A549 (cell line): ENCODE measurements at regions of chr7 and their contacts with region 1.

Region 1: GRCh38 chr7:26200444-26201246 is at the start of gene HNRNPA2B1:
- DNase-seq: peak; percentile 71 to 97
- ATAC-seq: peak; percentile 68 to 78
- H3K4me3 ChIP-seq: peak within 1 kb of the TSS; percentile 92
- H3K27ac ChIP-seq: peak within 1 kb of the TSS; percentile 99
- H3K4me1 ChIP-seq: peaks cover 37% of the 10 kb centered on the region
- CTCF ChIP-seq: no peak
- EP300 ChIP-seq: no peak
- POLR2A ChIP-seq: peak; percentile 99
- RAD21 ChIP-seq: no peak
- polyA plus RNA-seq, gene HNRNPA2B1: 595 and 1,070 TPM in 2 replicates

Region 2: DNA sequence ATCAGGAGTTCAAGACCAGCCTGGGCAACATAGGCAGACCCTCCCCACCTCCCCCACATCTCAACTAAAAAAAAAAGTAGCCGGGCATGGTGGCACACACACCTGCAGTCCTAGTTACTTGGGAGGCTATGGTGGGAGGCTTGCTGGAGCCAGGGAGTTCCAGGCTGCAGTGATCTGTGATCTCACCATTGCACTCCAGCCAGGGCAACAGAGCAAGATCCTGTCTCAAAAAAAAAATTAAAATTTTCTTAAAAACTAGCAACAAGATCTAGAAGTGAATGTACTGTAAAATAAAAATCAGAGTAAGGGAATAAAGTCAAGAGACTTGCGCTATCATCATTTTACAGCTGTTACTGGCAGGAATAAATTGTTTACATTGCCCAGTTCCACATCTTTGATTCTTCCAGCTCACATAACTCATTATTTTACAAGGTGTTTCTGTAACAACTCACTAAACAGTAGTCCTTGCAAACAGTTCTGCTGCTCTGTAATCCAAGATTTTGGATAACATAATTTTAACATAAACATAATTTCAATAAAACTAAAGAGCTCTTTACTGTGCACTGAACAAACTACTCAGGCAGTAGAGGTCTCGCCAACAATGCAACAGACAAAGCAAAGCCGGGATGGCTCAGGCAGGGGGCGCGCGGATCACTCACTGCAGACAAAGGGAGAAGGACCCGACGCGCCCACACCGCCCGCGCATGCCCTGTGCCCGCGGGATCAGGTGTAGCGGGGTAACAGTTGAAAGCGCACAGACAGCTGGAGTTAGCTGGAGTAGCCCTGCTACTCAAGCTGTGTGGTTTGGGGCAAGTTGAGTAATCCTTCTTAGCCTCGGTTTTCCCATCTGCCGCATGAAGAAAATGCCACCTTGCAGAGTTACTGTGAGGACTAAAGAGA is 122.0 kb before region 1 on chr7:
- CTCF ChIA-PET with region 1: interaction called, 23 read pairs
- POLR2A ChIA-PET with region 1: interaction called, 7 read pairs
- DNase-seq: peak; percentile 69 to 78
- ATAC-seq: peak; percentile 99 to 100
- H3K4me3 ChIP-seq: peak overlapping the region; percentile 34; the same call in 1 of the 3 replicates
- H3K27ac ChIP-seq: no peak overlapping the region
- H3K4me1 ChIP-seq: peaks cover 6% of the 10 kb centered on the region; the same call in 1 of the 3 replicates
- CTCF ChIP-seq: peak; percentile 58
- EP300 ChIP-seq: no peak
- POLR2A ChIP-seq: no peak
- RAD21 ChIP-seq: peak; percentile 63 to 64; a peak in 4 of 5 replicates

Region 3: DNA sequence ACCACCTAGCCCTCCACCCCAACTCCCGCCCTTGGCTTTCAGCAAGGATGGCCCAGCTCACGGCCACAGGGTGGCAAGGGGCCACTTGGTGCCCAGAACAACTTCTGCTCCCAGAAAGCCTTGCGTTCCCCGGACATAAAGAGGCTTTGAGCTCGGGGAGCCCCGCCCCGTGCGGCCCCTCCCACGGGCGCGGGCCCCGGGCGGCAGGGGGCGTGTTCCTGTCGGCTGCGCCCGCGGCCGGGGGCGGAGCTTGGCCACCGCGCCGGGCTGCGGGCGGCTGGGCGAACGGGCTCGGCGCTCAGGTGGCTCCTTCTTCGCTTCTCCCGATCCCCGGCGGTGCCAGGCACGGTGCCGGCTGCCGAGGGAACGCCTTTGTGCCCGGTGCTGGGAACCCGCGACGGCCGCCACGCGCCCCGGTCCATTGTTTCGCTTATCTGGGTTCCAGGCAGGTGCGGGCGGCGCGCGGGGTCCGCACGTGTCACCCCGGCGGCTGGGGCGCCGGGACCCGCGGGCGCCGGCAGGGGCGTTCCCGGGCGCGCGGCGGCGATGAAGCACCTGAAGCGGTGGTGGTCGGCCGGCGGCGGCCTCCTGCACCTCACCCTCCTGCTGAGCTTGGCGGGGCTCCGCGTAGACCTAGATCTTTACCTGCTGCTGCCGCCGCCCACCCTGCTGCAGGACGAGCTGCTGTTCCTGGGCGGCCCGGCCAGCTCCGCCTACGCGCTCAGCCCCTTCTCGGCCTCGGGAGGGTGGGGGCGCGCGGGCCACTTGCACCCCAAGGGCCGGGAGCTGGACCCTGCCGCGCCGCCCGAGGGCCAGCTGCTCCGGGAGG is 48.5 kb before region 1 on chr7 and contains the start of gene NFE2L3:
- CTCF ChIA-PET with region 1: interaction called, 4 read pairs
- POLR2A ChIA-PET with region 1: interaction called, 22 read pairs
- DNase-seq: peak; percentile 64 to 80
- ATAC-seq: peak; percentile 82 to 89
- H3K4me3 ChIP-seq: peak within 1 kb of the TSS; percentile 91
- H3K27ac ChIP-seq: peak within 1 kb of the TSS; percentile 78 to 94
- H3K4me1 ChIP-seq: peaks cover 28% of the 10 kb centered on the region; the same call in 2 of the 3 replicates
- CTCF ChIP-seq: no peak
- EP300 ChIP-seq: no peak
- POLR2A ChIP-seq: peak; percentile 63
- RAD21 ChIP-seq: no peak
- polyA plus RNA-seq, gene NFE2L3: 9.6 and 11.4 TPM in 2 replicates

Region 4: DNA sequence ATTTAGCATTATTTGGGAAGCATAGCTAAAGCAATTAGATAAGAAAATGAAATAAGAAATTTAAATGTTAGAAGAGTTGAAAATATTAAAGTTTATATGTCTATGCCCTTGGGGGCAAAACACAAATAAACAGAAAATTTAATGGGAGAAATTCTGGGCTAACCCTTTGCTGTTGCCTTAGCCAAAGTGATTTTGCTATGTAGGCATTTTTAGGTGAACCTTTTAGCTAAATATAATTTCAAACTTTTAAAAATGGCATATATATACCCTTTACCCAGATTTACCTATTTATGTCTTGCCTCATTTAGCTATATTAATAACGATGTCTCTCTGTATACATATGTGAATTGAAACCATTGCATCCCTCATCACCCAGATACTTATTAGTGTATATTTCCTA is 28.6 kb before region 1 on chr7:
- CTCF ChIA-PET with region 1: no interaction called
- POLR2A ChIA-PET with region 1: no interaction called
- DNase-seq: no peak
- ATAC-seq: no peak
- H3K4me3 ChIP-seq: no peak overlapping the region
- H3K27ac ChIP-seq: no peak overlapping the region
- H3K4me1 ChIP-seq: no peaks in the 10 kb centered on the region
- CTCF ChIP-seq: no peak
- EP300 ChIP-seq: no peak
- POLR2A ChIP-seq: no peak
- RAD21 ChIP-seq: no peak

Region 5: GRCh38 chr7:26187380-26188205 is 13.1 kb before region 1 on chr7:
- CTCF ChIA-PET with region 1: interaction called, 31 read pairs
- POLR2A ChIA-PET with region 1: interaction called, 42 read pairs
- DNase-seq: no peak
- ATAC-seq: peak; percentile 14 to 26; a peak in 4 of 6 replicates
- H3K4me3 ChIP-seq: no peak overlapping the region
- H3K27ac ChIP-seq: peak overlapping the region in 1 of 2 experiments; percentile 57; a peak in 2 of 6 replicates
- H3K4me1 ChIP-seq: peaks cover 95% of the 10 kb centered on the region
- CTCF ChIP-seq: no peak
- EP300 ChIP-seq: no peak
- POLR2A ChIP-seq: no peak
- RAD21 ChIP-seq: no peak

Region 6: DNA sequence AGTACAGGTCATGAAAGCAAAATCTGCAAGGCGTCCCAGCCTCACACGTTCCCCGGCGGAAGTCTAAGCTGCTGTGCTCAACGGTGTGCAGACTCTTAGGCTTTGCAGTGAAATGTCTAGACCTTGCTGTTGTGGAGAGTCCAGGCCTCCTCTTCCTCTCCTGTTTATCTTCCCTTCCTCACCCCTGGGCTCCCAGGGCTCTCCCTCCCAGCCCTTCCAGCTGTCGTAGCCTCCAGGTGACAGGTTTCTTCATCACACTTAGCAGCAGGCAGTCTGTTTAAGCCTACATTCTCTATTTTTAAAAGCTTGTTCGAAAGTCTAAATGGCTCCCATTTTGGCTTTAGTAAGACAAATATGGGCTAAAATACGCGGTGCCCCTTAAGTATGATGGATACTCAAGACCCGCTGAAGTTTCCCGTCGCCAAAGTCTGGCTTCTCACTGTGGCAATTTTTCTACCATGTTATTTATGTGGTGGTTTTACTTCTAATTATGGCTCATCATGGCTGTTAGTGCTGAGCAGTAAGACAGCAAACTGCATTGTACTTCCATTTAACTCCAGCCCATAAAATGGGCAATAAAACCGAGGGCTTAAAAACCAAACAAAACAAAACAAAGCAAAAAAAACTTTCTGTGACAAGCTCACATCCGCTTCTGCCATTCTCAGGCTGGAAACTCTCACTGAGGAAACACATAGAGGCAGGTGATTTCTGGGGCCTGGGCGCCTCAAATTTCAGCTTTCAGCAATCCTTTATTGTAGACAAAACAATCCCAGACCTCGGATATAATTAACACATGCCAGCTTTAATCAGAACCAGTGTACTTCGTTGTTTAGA is 334.2 kb after region 1 on chr7:
- CTCF ChIA-PET with region 1: no interaction called
- POLR2A ChIA-PET with region 1: no interaction called
- DNase-seq: no peak
- ATAC-seq: no peak
- H3K4me3 ChIP-seq: no peak overlapping the region
- H3K27ac ChIP-seq: no peak overlapping the region
- H3K4me1 ChIP-seq: no peaks in the 10 kb centered on the region
- CTCF ChIP-seq: no peak
- EP300 ChIP-seq: no peak
- POLR2A ChIP-seq: no peak
- RAD21 ChIP-seq: no peak